SK-N-SH (cell line): ENCODE measurements at regions of chr12 and their contacts with region 1.

Region 1: DNA sequence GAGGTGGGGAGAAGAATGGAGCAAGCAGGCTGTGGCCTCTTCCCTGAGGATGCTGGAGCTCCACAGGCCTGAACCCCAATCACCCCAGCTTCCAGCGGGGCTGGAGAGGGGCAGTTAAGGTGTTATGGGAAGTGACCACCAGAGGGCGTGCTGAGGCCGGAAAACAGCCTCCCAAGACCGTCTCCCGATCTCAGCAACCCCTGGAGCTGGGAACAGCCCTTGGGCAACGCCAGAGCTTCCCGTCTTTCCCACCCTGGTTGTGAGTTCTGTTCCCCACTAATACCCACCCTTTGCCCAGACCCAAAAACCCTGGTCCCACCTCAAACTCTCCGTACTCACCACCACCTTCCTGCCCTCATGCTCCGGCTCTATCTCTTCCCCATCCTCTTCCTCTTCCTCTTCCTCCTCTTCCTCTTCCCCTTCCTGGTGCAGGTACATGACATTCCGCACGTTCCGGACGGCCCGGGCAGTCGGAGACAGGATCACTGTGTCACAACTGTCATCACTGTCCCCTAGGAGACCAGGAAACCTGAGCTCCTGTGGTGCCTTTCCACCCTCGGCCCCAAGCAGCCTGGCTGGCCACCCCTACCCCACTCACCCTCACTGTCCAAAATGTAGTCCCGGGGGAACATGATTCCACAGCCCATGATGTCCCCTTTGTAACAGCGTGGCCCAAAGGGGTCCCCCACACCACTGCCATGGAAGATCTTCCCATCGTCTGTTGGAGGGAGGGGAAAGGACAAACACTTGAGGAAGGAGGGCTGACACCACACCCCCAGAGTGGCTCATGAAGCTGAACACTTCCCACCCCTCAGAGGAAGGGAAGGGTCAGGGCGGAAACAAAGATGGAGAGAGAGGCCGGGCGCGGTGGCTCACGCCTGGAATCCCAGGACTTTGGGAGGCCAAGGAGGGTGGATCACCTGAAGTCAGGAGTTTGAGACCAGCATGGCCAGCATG is 12.9 kb downstream of the SPRYD3 start:
- DNase-seq: peak; percentile 92
- H3K4me3 ChIP-seq: no peak overlapping the region; a peak in 1 of 4 replicates
- H3K27ac ChIP-seq: peak overlapping the region in 1 of 2 experiments; percentile 66; a peak in 2 of 4 replicates
- H3K4me1 ChIP-seq: peaks cover 20 to 22% of the 10 kb centered on the region in 2 experiments; a peak in 3 of 4 replicates
- H3K27me3 ChIP-seq: no peaks in the 10 kb centered on the region
- CTCF ChIP-seq: peak; percentile 84
- EP300 ChIP-seq: no peak
- RAD21 ChIP-seq: peak; percentile 94

Region 2: GRCh38 chr12:53047221-53048042 is 18.8 kb before region 1 on chr12:
- CTCF ChIA-PET with region 1: interaction called, 182 read pairs
- POLR2A ChIA-PET with region 1: interaction called, 6 read pairs
- DNase-seq: peak; percentile 95
- H3K4me3 ChIP-seq: peak overlapping the region; percentile 73 to 75
- H3K27ac ChIP-seq: peak overlapping the region; percentile 95 to 98
- H3K4me1 ChIP-seq: peaks cover 29 to 63% of the 10 kb centered on the region in 2 experiments
- H3K27me3 ChIP-seq: no peaks in the 10 kb centered on the region
- CTCF ChIP-seq: no peak
- EP300 ChIP-seq: peak in 1 of 2 experiments; percentile 53; a peak in 1 of 4 replicates
- RAD21 ChIP-seq: no peak

Region 3: DNA sequence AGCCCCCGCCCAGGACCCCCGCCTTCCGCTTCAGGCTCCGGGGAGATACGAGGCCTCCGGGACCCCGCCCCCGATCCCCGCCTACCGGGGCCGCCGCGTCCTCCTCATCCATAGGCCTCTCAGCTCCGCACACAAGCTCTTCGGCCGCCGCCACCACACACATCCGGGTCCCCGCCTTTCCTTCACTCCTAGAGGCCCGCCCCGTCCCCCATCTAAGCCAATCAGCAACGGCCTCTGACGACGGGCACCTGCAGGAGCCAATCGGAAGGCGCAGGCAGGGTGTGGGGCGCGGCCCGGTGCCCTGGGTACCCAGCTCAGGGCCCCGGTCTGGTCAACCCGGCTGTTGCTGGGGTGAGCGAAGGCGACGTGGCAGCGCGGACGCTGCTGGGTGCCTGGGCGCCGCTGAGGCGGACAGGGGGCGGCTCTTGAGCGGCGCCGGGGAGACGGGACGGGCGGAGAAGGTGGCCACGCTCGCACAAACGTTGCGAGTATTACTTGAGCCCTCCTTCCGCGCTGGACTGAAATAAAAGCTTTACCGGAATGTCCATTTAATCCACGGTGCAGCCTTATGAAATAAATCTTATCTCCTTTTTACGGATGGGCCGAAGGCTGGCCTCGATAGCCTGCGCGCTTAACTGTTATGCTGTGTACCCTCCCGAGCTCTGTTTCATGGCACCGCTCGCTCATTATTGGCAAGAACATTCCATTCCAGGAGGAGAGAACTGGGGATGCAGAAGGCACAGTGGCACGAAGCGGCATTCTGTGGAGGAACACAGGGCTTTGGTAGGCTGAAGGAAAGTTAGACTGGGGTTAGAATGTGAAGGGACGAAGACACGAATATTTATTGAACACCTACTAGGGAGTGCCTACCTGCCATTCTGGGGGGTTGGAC is 13.2 kb after region 1 on chr12 and contains the start of gene SPRYD3:
- CTCF ChIA-PET with region 1: interaction called, 130 read pairs
- POLR2A ChIA-PET with region 1: interaction called, 10 read pairs
- DNase-seq: peak; percentile 100
- H3K4me3 ChIP-seq: peak within 1 kb of the TSS; percentile 55 to 72
- H3K27ac ChIP-seq: peak within 1 kb of the TSS; percentile 94 to 96
- H3K4me1 ChIP-seq: peaks cover 7 to 14% of the 10 kb centered on the region in 2 experiments; a peak in 2 of 4 replicates
- H3K27me3 ChIP-seq: no peaks in the 10 kb centered on the region
- CTCF ChIP-seq: no peak
- EP300 ChIP-seq: no peak; a peak in 1 of 4 replicates
- RAD21 ChIP-seq: no peak
- polyA plus RNA-seq, gene SPRYD3: 20.3 and 25.8 TPM in 2 replicates

Region 4: DNA sequence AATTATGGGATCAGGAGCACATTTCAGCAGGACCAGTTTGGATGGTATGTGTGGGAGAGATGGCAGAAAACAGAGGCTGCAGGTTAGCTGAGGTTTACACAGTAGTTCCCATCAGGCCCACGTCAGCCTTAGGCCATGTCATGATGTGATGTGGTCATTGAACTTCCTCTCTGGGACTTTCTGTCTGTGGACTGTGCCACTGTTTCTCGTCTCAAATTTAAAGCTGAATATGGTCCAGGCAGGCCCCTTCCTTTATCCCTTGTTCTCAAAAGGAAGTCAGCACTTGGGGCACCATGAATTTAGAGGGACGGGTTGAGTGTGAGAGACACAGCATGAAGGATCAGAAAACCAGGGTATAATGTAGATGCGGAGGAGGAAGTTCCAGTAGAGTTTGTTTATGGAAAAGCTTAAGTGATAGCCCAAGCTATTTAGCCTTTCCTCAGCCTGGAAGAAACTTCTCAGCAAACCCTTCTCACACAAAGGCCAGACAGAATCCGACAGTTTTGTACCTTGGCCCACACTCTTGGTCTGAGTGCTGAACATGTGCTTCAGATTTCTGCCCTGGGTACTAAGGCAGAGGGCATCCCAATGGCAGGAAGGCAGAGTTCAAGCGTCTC is 27.6 kb after region 1 on chr12:
- CTCF ChIA-PET with region 1: interaction called, 385 read pairs
- POLR2A ChIA-PET with region 1: interaction called, 8 read pairs
- DNase-seq: no peak
- H3K4me3 ChIP-seq: no peak overlapping the region
- H3K27ac ChIP-seq: no peak overlapping the region
- H3K4me1 ChIP-seq: peaks cover 10 to 20% of the 10 kb centered on the region in 2 experiments; a peak in 2 of 4 replicates
- H3K27me3 ChIP-seq: no peaks in the 10 kb centered on the region
- CTCF ChIP-seq: no peak
- EP300 ChIP-seq: no peak
- RAD21 ChIP-seq: no peak

Region 5: GRCh38 chr12:53105256-53105655 is 39.0 kb after region 1 on chr12:
- CTCF ChIA-PET with region 1: interaction called, 385 read pairs
- POLR2A ChIA-PET with region 1: interaction called, 3 read pairs
- DNase-seq: no peak
- H3K4me3 ChIP-seq: no peak overlapping the region
- H3K27ac ChIP-seq: no peak overlapping the region
- H3K4me1 ChIP-seq: peaks cover 0 to 10% of the 10 kb centered on the region in 2 experiments; a peak in 1 of 4 replicates
- H3K27me3 ChIP-seq: no peaks in the 10 kb centered on the region
- CTCF ChIP-seq: no peak
- EP300 ChIP-seq: no peak
- RAD21 ChIP-seq: no peak

Region 6: GRCh38 chr12:53190108-53190729 is 124.0 kb after region 1 on chr12:
- CTCF ChIA-PET with region 1: interaction called, 96 read pairs
- POLR2A ChIA-PET with region 1: interaction called, 3 read pairs
- DNase-seq: peak; percentile 79
- H3K4me3 ChIP-seq: no peak overlapping the region
- H3K27ac ChIP-seq: no peak overlapping the region
- H3K4me1 ChIP-seq: peaks cover 0 to 12% of the 10 kb centered on the region in 2 experiments; a peak in 1 of 4 replicates
- H3K27me3 ChIP-seq: no peaks in the 10 kb centered on the region
- CTCF ChIP-seq: peak; percentile 73
- EP300 ChIP-seq: no peak
- RAD21 ChIP-seq: peak; percentile 51

Region 7: GRCh38 chr12:53213348-53213747 is 147.1 kb after region 1 on chr12:
- CTCF ChIA-PET with region 1: interaction called, 23 read pairs
- POLR2A ChIA-PET with region 1: no interaction called
- DNase-seq: peak; percentile 93
- H3K4me3 ChIP-seq: no peak overlapping the region
- H3K27ac ChIP-seq: no peak overlapping the region; a peak in 1 of 4 replicates
- H3K4me1 ChIP-seq: peaks cover 6 to 19% of the 10 kb centered on the region in 2 experiments; a peak in 3 of 4 replicates
- H3K27me3 ChIP-seq: no peaks in the 10 kb centered on the region
- CTCF ChIP-seq: peak; percentile 93
- EP300 ChIP-seq: no peak
- RAD21 ChIP-seq: peak; percentile 96